ENCODE measurements at regions of chr1 and their contacts with region 1.

Region 1: GRCh38 chr1:112390775-112391602 is 5.0 kb upstream of the CTTNBP2NL start:
- DNase-seq: peak; percentile 86 to 88
- H3K4me3 ChIP-seq: peak overlapping the region; percentile 30; the same call in 1 of the 2 replicates
- H3K27ac ChIP-seq: no peak overlapping the region
- H3K4me1 ChIP-seq: peaks cover 28% of the 10 kb centered on the region
- H3K27me3 ChIP-seq: no peaks in the 10 kb centered on the region
- CTCF ChIP-seq: peak; percentile 98

Region 2: GRCh38 chr1:112344754-112345423 is 46.1 kb before region 1 on chr1:
- CTCF ChIA-PET with region 1: no interaction called
- POLR2A ChIA-PET with region 1: no interaction called
- intact Hi-C with region 1: no loop called
- DNase-seq: no peak
- H3K4me3 ChIP-seq: no peak overlapping the region
- H3K27ac ChIP-seq: no peak overlapping the region
- H3K4me1 ChIP-seq: no peaks in the 10 kb centered on the region
- H3K27me3 ChIP-seq: peaks cover 77% of the 10 kb centered on the region
- CTCF ChIP-seq: no peak

Region 3: DNA sequence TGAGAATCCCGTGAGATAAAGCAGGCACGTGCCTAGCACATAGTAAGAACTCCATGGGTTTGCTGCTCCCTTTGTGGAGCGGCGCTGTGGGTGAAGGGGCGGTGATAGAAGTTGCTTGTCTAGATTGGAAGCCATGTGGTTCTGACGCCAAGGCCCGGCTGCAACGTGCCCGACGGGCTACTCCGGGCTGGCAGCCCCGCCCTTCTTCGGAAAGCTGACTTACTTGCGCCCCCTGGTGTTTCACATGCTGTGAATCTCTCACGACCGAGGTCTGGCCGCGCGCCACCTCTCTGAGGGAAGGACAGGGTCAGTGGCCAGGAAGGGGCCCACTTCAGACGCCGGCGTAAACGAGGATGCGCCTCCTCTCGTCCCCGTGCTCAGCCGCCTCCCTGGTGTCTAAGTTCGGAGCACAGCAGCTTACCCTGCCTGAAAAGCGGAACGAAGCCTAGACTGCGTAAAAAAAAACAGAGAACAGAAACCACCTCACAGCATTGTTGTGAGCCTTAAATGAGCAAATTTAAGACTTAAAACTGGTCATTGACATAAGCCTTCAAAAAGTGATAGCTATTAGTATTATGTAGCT is 75.2 kb after region 1 on chr1:
- CTCF ChIA-PET with region 1: interaction called, 13 read pairs
- POLR2A ChIA-PET with region 1: interaction called, 4 read pairs
- intact Hi-C with region 1: loop called (anchors 1 kb)
- DNase-seq: peak; percentile 85 to 89
- H3K4me3 ChIP-seq: peak overlapping the region; percentile 54
- H3K27ac ChIP-seq: no peak overlapping the region
- H3K4me1 ChIP-seq: peaks cover 40% of the 10 kb centered on the region
- H3K27me3 ChIP-seq: no peaks in the 10 kb centered on the region
- CTCF ChIP-seq: peak; percentile 98

Region 4: GRCh38 chr1:112477550-112477949 is 86.6 kb after region 1 on chr1:
- CTCF ChIA-PET with region 1: no interaction called
- POLR2A ChIA-PET with region 1: no interaction called
- intact Hi-C with region 1: no loop called
- DNase-seq: peak in 1 of 2 experiments; percentile 15
- H3K4me3 ChIP-seq: no peak overlapping the region
- H3K27ac ChIP-seq: no peak overlapping the region
- H3K4me1 ChIP-seq: no peaks in the 10 kb centered on the region
- H3K27me3 ChIP-seq: no peaks in the 10 kb centered on the region
- CTCF ChIP-seq: no peak

Region 5: DNA sequence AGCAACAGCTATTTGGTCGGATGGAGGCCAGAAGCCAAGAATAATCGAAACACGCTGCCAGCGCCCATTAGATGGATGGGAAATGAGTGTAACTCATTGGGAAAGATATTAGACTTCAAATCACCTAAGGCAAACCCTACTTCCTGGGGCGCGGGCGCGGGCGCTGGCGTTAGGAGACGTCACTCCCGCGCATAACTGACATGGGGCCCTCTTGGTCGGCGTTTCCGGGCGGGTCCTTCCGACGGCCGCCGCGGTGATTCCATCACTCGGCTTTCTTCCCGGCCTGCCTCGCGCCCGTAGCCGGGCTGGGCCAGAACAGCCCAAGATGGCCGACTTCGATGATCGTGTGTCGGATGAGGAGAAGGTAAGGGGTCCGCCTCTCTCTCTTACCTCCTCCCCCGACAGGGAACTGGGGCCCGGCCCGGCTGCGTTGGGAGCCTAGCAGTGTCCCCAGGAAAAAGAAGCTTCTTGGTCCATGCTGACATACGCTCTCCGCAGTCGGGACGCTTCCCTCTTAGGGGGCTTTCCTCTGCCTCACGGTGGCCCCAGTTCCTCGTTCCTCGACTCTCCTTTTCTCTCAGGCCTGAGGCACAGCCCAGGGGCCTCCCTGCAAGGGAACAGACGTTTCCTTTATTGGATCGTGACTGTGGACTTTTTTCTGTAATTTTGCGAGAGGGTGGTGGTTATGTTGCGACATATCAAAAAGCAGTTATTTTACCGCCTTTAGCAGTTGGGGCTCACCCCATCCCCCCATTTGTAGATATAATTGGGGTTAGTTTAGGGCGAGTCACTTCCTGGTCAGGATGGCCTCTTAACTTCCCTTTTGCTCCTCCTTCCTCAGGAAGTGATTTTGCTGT is 228.8 kb after region 1 on chr1 and contains the start of gene CAPZA1:
- CTCF ChIA-PET with region 1: interaction called, 6 read pairs
- POLR2A ChIA-PET with region 1: interaction called, 4 read pairs
- intact Hi-C with region 1: loop called (anchors 1 kb)
- DNase-seq: peak; percentile 81 to 83
- H3K4me3 ChIP-seq: peak within 1 kb of the TSS; percentile 96
- H3K27ac ChIP-seq: peak within 1 kb of the TSS; percentile 86
- H3K4me1 ChIP-seq: peaks cover 37% of the 10 kb centered on the region
- H3K27me3 ChIP-seq: no peaks in the 10 kb centered on the region
- CTCF ChIP-seq: no peak
- total RNA-seq, gene CAPZA1: 101 and 145 TPM in 2 replicates

Region 6: GRCh38 chr1:112715264-112716053 is 324.5 kb after region 1 on chr1 and contains the start of gene PPM1J:
- CTCF ChIA-PET with region 1: no interaction called
- POLR2A ChIA-PET with region 1: interaction called, 24 read pairs
- intact Hi-C with region 1: loop called (anchors 2 kb)
- DNase-seq: peak; percentile 92 to 99
- H3K4me3 ChIP-seq: peak within 1 kb of the TSS; percentile 85
- H3K27ac ChIP-seq: no peak within 1 kb of the TSS
- H3K4me1 ChIP-seq: peaks cover 18% of the 10 kb centered on the region
- H3K27me3 ChIP-seq: no peaks in the 10 kb centered on the region
- CTCF ChIP-seq: no peak
- total RNA-seq, gene PPM1J: 6.0 and 7.7 TPM in 2 replicates

Region 7: DNA sequence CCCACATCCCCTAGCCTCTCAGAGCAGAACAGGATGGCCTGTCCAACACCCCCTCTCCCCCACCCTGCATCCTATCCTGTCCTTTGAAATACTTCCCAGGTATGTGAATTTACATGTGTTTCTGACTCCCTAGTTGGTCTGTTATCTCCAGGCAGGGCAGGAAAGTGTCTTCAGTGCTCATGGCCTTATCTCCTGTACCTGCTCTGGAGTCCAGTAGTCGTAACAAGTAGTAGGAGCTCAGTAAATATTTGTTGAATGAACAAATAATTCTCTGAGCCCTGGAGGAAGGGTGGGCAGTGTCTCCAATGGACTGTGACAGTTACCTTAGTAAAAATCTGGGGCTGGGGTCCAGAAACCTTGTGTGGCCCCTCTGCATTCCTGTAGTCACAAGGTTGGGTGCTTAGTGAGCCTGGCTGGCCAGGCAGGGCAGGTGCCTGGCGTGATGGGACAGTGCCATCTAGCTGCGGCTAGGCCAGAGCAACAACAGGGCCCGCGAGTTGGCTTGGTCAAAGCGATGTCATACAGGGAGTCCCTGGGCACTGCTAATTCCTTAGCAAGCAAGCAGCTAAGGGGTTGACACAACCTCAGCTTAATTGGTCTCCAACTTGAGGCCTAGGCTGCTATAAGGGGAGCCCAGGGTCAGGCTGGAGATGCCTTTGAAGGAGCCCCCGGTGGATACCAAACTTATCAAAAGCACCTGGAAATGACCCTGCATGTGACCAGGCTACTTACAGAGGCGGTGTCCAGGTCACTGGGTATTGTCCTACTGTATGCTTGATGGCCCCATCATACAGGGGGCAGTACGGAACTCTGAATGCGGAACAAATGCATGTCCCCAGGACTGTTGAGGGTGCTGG is 413.1 kb after region 1 on chr1:
- CTCF ChIA-PET with region 1: interaction called, 3 read pairs
- POLR2A ChIA-PET with region 1: no interaction called
- intact Hi-C with region 1: loop called (anchors 2 kb)
- DNase-seq: peak; percentile 68 to 78
- H3K4me3 ChIP-seq: no peak overlapping the region
- H3K27ac ChIP-seq: no peak overlapping the region
- H3K4me1 ChIP-seq: peaks cover 21% of the 10 kb centered on the region
- H3K27me3 ChIP-seq: no peaks in the 10 kb centered on the region
- CTCF ChIP-seq: peak; percentile 96

Region 8: GRCh38 chr1:113307771-113308445 is 916.9 kb after region 1 on chr1:
- CTCF ChIA-PET with region 1: no interaction called
- POLR2A ChIA-PET with region 1: interaction called, 10 read pairs
- intact Hi-C with region 1: no loop called
- DNase-seq: peak; percentile 10 to 99
- H3K4me3 ChIP-seq: peak overlapping the region; percentile 25; the same call in 1 of the 2 replicates
- H3K27ac ChIP-seq: peak overlapping the region; percentile 95
- H3K4me1 ChIP-seq: peaks cover 27% of the 10 kb centered on the region
- H3K27me3 ChIP-seq: no peaks in the 10 kb centered on the region
- CTCF ChIP-seq: no peak